ENCODE measurements at regions of chr1 and their contacts with region 1.

Region 1: DNA sequence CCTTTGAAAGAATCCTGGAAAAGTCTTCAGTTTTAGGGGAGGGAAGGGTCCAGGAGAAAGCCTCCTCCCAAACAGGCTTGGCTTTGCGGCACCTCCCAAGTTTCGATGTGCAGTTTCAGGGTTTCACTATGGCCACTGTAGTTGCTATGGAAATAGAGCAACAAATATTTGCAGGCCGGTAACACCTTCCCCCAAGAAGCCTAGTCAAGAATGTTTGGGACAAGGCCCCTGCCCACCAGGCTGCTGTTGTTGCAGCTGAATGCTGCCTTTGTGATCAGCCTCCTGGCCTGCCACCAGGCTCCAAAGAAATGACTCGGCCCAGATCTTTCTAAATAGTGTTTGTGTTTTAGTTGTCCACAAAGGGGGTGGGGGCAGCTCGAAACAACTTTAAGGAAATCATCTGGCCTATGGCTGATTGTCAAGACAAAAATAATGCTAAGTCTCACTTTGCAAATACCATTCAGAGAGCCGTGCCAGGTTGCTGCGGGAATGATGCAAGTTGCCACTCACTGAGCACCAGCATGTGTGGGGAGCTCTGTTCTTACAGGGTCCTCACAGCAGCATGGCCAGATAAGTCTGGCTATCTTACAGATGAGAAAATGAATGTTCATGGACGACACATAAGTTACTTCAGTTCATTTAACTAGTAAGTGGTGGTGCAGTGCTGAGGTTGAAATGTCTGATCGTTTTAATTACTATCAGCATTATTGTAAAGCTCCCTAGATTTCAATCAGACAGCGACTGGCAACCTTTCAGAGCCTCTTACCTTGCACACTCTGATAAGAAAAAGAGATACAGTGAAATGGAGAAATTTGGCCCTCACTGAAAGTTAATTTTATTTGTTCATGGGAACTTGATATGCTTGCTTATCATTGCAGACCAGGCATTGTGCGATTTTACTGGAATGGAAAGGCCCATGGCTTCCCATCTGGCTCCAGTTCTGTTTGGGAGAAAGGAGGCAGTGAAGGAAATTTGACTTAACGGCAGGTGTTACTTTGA is 91.2 kb upstream of the JUN start:
- DNase-seq: peak in 1 of 2 donors; percentile 65
- H3K4me3 ChIP-seq: no peak overlapping the region
- H3K27ac ChIP-seq: peak overlapping the region; percentile 72 to 76
- H3K4me1 ChIP-seq: peaks cover 0 to 13% of the 10 kb centered on the region in 2 donors
- H3K27me3 ChIP-seq: no peaks in the 10 kb centered on the region
- CTCF ChIP-seq: no peak
- POLR2A ChIP-seq: no peak

Region 2: DNA sequence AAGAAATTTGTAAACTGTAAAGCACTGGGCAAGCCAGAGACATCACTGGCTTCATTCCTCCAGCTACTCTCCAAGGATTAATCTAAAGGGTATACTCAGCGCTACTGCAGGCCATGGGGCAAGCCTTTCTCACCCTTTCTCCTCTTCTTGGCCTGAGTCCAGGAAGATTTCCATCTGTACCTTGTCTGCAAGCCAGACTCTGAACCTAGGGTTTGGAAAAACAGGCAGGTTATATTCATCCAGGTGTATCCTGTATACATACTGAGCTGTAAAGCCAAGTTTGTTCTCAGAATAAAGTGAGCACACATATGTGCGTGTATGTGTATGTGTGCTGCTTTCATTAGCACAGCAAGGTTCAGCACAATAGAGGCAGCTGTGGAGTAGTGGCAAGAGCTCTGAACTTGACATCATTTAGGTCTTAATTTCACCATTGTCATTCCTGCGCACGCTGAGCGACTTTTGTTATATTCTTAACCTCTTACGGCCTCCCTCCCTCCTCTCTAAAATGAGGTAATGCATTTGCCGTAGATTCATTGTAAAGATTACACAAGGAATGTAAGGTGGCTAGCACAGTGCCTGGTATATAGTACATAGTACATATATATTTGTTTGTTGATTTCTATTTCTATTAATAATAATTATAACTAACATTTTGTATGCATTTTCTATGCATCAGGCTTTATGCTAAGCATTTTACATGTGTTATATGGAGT is 36.9 kb after region 1 on chr1:
- intact Hi-C with region 1: loop called (anchors 1 kb)
- DNase-seq: no peak
- H3K4me3 ChIP-seq: no peak overlapping the region
- H3K27ac ChIP-seq: no peak overlapping the region
- H3K4me1 ChIP-seq: no peaks in the 10 kb centered on the region
- H3K27me3 ChIP-seq: no peaks in the 10 kb centered on the region
- CTCF ChIP-seq: no peak
- POLR2A ChIP-seq: no peak

Region 3: DNA sequence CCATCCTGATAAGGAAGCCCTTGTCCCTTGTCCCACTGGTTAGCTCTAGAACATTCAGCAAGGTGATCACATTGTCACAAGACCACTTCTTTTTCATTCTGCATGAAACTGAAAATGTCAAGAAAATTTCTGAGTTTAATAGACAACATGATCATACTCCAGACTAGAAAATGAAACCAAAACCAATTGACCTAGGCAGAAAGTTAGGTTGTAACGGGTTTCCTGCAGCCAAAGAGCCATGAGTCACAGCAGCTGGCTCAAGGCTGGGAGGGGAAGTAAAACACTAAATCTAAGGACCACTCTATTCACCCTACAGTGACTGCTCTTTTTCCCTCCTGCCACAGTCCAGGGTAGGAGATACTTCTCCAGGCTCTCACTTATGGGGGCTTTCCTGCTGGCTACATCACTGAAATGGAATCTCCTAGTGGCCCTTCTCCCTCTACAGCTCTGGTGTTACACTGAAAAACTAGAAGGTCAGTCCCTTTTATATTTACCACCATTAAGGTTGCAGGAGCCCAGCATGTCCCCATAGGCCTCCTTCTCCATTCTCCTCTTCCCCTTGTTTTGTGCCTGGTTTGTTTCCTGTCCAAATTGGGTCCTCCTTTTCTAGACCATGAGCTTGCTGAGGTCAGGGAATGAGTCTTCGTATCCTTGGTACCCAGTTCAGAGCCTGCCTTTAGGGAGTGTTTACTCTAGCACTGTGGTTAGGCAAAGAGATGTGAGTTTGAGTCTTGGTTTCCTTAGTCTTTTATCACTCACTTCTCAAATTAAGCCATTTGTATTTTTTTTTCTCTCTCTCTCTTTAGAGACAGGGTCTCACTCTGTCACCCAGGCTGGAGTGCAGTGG is 145.3 kb after region 1 on chr1:
- intact Hi-C with region 1: no loop called
- DNase-seq: peak in 1 of 2 donors; percentile 24
- H3K4me3 ChIP-seq: peak overlapping the region; percentile 15 to 48 (median 20)
- H3K27ac ChIP-seq: peak overlapping the region; percentile 33 to 45
- H3K4me1 ChIP-seq: no peaks in the 10 kb centered on the region
- H3K27me3 ChIP-seq: no peaks in the 10 kb centered on the region
- CTCF ChIP-seq: no peak
- POLR2A ChIP-seq: no peak